Dendritic cell treated with granulocyte-macrophage colony-stimulating factor and Interleukin-4, amounts not matched to agents 40 ng/mL and 50 ng/mL, for 4 days (primary cell): ENCODE measurements at regions of chr11 and their contacts with region 1.

Region 1: DNA sequence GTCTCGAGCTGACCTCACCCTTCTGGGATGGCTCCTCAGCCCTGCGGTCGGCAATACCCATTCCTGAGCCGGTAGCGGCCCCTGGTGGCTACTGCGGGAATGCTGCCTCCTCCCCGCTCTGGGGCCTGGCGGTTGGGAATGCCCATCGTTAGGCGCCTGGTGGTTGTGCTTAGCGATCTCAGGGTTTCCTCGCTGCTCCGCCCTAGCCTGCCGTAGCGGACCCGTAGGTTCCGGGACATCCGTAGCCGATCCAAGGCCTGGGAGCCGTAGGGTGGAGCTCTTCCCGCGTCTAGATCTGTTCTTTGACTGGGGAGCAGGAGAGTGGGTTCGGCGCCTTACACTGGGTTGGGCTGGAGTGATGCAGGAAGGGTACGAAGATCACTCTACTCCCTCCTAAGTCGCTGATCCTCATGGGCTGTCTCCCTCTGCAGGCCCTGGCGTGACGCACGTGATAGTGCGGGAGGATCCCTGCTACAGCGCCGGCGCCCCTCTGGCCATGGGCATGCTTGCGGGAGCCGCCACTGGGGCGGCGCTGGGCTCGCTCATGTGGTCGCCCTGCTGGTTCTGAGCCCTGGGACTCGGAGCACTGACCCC is 14.8 kb downstream of the PLEKHB1 start:
- H3K4me3 Mint-ChIP-seq: peak overlapping the region; percentile 59
- H3K27ac Mint-ChIP-seq: peak overlapping the region; percentile 14
- H3K4me1 Mint-ChIP-seq: peaks cover 26% of the 10 kb centered on the region
- H3K27me3 Mint-ChIP-seq: peaks cover 22% of the 10 kb centered on the region

Region 2: GRCh38 chr11:73350908-73351636 is 310.1 kb before region 1 on chr11:
- intact Hi-C with region 1: loop called (anchors 2 kb)
- H3K4me3 Mint-ChIP-seq: no peak overlapping the region
- H3K27ac Mint-ChIP-seq: no peak overlapping the region
- H3K4me1 Mint-ChIP-seq: peaks cover 11% of the 10 kb centered on the region
- H3K27me3 Mint-ChIP-seq: peaks cover 3% of the 10 kb centered on the region

Region 3: GRCh38 chr11:73404048-73404447 is 257.1 kb before region 1 on chr11:
- intact Hi-C with region 1: loop called (anchors 1 kb)
- H3K4me3 Mint-ChIP-seq: no peak overlapping the region
- H3K27ac Mint-ChIP-seq: peak overlapping the region; percentile 35
- H3K4me1 Mint-ChIP-seq: peaks cover 75% of the 10 kb centered on the region
- H3K27me3 Mint-ChIP-seq: no peaks in the 10 kb centered on the region

Region 4: GRCh38 chr11:73478738-73479347 is 182.3 kb before region 1 on chr11:
- intact Hi-C with region 1: loop called (anchors 5 kb)
- H3K4me3 Mint-ChIP-seq: no peak overlapping the region
- H3K27ac Mint-ChIP-seq: no peak overlapping the region
- H3K4me1 Mint-ChIP-seq: peaks cover 18% of the 10 kb centered on the region
- H3K27me3 Mint-ChIP-seq: no peaks in the 10 kb centered on the region

Region 5: DNA sequence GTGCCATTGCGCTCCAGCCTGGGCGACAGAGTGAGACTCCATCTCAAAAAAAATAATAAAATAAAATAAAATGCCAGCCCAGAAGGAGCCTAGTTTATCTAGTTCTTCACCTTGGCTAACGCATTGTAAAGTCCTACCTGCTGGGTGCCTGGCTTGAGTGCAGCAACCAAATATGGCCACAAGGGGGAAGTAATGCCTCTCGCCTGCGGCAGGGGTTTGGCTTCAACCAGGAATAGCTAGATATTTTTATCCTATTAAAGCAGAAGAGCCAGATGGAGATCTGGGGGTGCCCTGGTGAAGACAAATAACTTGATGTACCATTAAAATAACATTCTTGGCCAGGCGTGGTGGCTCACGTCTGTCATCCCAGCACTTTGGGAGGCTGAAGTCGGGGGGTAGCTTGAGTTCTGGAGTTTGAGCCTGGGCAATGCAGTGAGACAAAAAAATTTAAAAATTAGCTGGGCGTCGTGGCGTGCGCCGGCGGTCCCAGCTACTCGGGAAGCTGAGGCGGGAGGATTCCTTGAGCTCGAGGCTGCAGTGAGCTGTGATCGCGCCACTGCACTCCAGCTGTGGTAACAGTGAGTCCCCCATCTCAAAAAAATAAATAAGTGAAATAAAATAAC is 35.3 kb before region 1 on chr11:
- intact Hi-C with region 1: loop called (anchors 1 kb)
- H3K4me3 Mint-ChIP-seq: no peak overlapping the region
- H3K27ac Mint-ChIP-seq: peak overlapping the region; percentile 63
- H3K4me1 Mint-ChIP-seq: peaks cover 44% of the 10 kb centered on the region
- H3K27me3 Mint-ChIP-seq: no peaks in the 10 kb centered on the region

Region 6: DNA sequence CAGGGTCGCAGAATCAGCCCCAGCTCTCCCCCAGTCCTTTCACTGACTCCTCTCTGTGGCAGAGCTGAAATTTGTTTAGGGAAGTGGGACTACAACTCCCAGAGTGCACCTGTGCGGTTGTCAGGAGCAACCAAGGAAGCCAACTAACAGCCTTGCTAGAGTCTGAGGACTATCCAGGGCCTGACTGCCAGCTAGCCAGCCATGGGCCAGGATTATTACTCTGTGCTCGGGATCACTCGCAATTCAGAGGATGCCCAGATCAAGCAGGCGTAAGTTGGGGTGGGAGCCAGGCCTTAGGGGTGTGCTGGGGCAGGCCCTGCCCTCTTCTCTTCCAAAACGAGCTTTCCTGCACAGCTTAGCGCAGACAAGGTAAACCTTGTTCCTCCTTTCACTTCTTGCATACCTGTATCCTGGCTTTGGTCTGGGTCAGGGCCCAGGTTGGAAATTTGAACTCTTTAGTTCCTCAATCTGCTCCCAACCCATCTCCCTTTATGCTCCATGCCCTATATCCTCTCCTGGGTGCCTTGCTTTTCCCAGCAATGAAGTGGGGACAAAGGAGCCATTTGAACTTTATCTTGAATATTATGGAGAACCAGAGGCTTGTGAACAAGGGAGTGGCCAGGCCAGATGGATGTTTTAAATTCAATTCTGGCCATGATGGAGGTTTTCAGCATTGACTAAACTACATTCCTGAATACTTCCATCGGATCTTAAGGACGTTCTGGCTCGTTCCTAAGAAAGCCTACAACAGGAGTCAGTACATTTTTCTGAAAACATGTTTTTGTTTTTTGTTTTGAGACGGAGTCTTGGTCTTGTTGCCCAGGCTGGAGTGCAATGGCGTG is 290.0 kb after region 1 on chr11 and contains the start of gene DNAJB13:
- intact Hi-C with region 1: no loop called
- H3K4me3 Mint-ChIP-seq: no peak within 1 kb of the TSS
- H3K27ac Mint-ChIP-seq: no peak within 1 kb of the TSS
- H3K4me1 Mint-ChIP-seq: peaks cover 2% of the 10 kb centered on the region
- H3K27me3 Mint-ChIP-seq: peaks cover 3% of the 10 kb centered on the region